Activated CD8-positive, alpha-beta T cell treated with anti-CD3 and anti-CD28 coated beads, Interleukin-2, amount 10 ng/mL, durations not matched to agents 7 days and 5 days (primary cell): ENCODE measurements at regions of chr19 and their contacts with region 1.

Region 1: DNA sequence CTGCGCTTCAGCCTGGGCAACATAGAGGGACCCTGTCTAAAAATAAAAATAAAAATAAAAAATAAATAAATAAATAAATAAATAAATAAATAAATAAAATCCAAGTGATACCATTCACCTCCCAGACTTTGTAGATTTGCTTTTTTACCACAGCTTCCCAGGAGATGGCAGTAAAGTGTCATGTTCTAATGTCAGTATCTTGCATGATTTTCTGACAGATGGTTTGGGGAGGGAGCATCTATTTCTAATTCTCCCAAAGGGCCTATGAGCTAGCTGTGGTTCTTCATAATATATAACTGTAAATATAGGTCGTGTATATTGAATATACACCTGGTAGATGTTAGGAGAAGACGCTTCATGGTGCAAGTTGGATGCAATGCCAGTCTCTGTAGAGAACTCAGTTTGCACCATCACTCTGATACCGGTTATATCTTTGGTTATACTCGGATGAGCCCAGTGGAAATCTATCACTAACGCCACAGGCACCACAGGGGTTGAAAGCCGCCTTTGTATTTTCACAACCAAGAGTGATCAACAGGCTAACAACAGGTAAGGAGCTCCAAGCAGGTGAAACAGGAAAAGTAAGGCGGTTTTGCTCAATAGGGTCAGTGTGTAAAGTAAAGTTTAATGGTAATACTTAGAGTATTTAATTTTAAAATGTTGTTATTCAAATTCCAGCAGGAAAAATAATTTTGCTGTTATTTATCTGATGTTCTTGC is 13.9 kb downstream of the APLP1 start:
- DNase-seq: peak; percentile 73
- ATAC-seq: peak; percentile 31
- H3K4me3 Mint-ChIP-seq: no peak overlapping the region
- H3K27ac Mint-ChIP-seq: no peak overlapping the region
- H3K4me1 Mint-ChIP-seq: peaks cover 12% of the 10 kb centered on the region
- H3K27me3 Mint-ChIP-seq: peaks cover 5% of the 10 kb centered on the region

Region 2: GRCh38 chr19:35828692-35829301 is 53.5 kb before region 1 on chr19:
- CTCF ChIA-PET with region 1: no interaction called
- POLR2A ChIA-PET with region 1: no interaction called
- DNase-seq: peak; percentile 78
- ATAC-seq: peak; percentile 87
- H3K4me3 Mint-ChIP-seq: no peak overlapping the region
- H3K27ac Mint-ChIP-seq: no peak overlapping the region
- H3K4me1 Mint-ChIP-seq: peaks cover 3% of the 10 kb centered on the region
- H3K27me3 Mint-ChIP-seq: peaks cover 8% of the 10 kb centered on the region

Region 3: DNA sequence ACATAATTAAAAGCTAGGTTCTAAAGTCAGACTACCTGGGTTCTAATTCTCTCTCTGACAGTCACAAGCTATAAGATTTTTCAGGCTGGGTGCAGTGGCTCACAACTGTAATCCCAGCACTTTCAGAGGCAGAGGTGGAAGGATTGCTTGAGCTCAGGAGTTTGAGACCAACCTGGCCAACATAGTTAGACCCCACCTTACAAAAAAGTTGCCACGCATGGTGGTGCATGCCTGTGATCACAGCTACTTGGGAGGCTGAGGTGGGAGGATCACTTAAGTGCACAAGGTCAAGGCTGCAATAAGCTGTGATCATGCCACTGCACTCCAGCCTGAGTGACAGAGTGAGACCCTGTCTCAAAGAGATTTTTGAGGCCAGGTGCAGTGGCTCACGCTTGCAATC is 12.1 kb after region 1 on chr19:
- CTCF ChIA-PET with region 1: interaction called, 17 read pairs
- POLR2A ChIA-PET with region 1: interaction called, 4 read pairs
- DNase-seq: no peak
- ATAC-seq: no peak
- H3K4me3 Mint-ChIP-seq: no peak overlapping the region
- H3K27ac Mint-ChIP-seq: peak overlapping the region; percentile 34
- H3K4me1 Mint-ChIP-seq: peaks cover 26% of the 10 kb centered on the region
- H3K27me3 Mint-ChIP-seq: no peaks in the 10 kb centered on the region

Region 4: DNA sequence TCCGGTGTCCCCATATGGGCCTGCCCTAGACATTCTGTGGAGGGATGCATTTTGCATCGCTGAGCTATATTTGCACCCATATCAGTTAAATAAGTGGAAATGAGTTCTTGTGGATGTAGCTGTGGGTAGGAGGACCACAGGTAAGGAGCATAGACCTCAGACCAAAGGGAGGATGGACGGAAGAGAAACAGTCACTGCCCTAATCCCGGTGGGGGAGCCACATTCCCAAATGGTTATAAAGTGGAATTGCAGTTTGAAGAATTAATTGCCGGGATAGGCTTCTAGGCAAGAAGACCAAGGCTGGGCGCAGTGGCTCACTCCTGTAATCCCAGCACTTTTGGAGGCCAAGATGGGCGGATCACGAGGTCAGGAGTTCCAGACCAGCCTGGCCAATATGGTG is 114.5 kb after region 1 on chr19:
- CTCF ChIA-PET with region 1: no interaction called
- POLR2A ChIA-PET with region 1: no interaction called
- DNase-seq: no peak
- ATAC-seq: no peak
- H3K4me3 Mint-ChIP-seq: peak overlapping the region; percentile 92
- H3K27ac Mint-ChIP-seq: peak overlapping the region; percentile 15
- H3K4me1 Mint-ChIP-seq: peaks cover 26% of the 10 kb centered on the region
- H3K27me3 Mint-ChIP-seq: no peaks in the 10 kb centered on the region

Region 5: GRCh38 chr19:36032251-36033104 is 150.2 kb after region 1 on chr19 and contains the start of gene CLIP3:
- CTCF ChIA-PET with region 1: no interaction called
- POLR2A ChIA-PET with region 1: no interaction called
- DNase-seq: peak; percentile 39
- ATAC-seq: peak; percentile 58
- H3K4me3 Mint-ChIP-seq: peak within 1 kb of the TSS; percentile 29
- H3K27ac Mint-ChIP-seq: peak within 1 kb of the TSS; percentile 17
- H3K4me1 Mint-ChIP-seq: peaks cover 30% of the 10 kb centered on the region
- H3K27me3 Mint-ChIP-seq: no peaks in the 10 kb centered on the region
- total RNA-seq, gene CLIP3: 0.74 to 1.7 TPM